ENCODE measurements at regions of chr7 and their contacts with region 1.

Region 1: DNA sequence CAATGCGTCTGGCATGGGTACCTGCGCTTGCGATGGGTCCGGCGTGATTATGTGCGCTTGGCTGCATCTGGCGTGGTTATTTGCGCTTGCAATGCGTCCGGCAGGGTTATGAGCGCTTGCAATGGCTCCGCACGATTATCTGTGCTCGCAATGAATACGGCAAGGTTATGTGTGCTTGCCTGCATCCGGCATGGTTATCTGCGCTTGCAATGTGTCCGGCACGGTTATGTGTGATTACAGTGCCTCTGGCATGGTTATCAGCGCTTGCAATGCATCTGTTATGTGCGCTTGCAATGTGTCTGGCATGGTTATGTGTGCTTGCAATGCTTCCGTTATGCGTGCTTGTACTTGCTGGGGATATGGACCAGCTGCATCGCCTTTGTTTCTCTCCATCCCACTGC is 37.7 kb downstream of the RBAK start:
- DNase-seq: no peak
- ATAC-seq: no peak
- H3K4me3 ChIP-seq: no peak overlapping the region
- H3K27ac ChIP-seq: no peak overlapping the region
- H3K4me1 ChIP-seq: no peaks in the 10 kb centered on the region
- H3K27me3 ChIP-seq: no peaks in the 10 kb centered on the region
- CTCF ChIP-seq: no peak
- EP300 ChIP-seq: no peak
- POLR2A ChIP-seq: no peak
- RAD21 ChIP-seq: no peak

Region 2: GRCh38 chr7:3200504-3200903 is 1882.8 kb before region 1 on chr7:
- CTCF ChIA-PET with region 1: no interaction called
- POLR2A ChIA-PET with region 1: no interaction called
- RAD21 ChIA-PET with region 1: no interaction called
- SMC1A ChIA-PET with region 1: no interaction called
- in situ Hi-C with region 1: no loop called
- intact Hi-C with region 1: loop called (anchors 10 kb)
- DNase-seq: no peak
- ATAC-seq: peak; percentile 67
- H3K4me3 ChIP-seq: no peak overlapping the region
- H3K27ac ChIP-seq: no peak overlapping the region
- H3K4me1 ChIP-seq: no peaks in the 10 kb centered on the region
- H3K27me3 ChIP-seq: no peaks in the 10 kb centered on the region
- CTCF ChIP-seq: peak; percentile 37 to 56 (median 45); a peak in 5 of 6 replicates
- EP300 ChIP-seq: no peak
- POLR2A ChIP-seq: no peak
- RAD21 ChIP-seq: peak; percentile 39

Region 3: GRCh38 chr7:4610768-4611467 is 472.4 kb before region 1 on chr7:
- CTCF ChIA-PET with region 1: no interaction called
- POLR2A ChIA-PET with region 1: no interaction called
- RAD21 ChIA-PET with region 1: no interaction called
- SMC1A ChIA-PET with region 1: no interaction called
- in situ Hi-C with region 1: loop called (anchors 25 kb)
- intact Hi-C with region 1: loop called (anchors 1 kb)
- DNase-seq: peak; percentile 39
- ATAC-seq: peak; percentile 91
- H3K4me3 ChIP-seq: no peak overlapping the region
- H3K27ac ChIP-seq: no peak overlapping the region
- H3K4me1 ChIP-seq: peaks cover 7% of the 10 kb centered on the region
- H3K27me3 ChIP-seq: no peaks in the 10 kb centered on the region; a peak in 1 of 4 replicates
- CTCF ChIP-seq: peak; percentile 77 to 85 (median 78)
- EP300 ChIP-seq: no peak
- POLR2A ChIP-seq: no peak
- RAD21 ChIP-seq: peak; percentile 92

Region 4: GRCh38 chr7:4797858-4798705 is 285.2 kb before region 1 on chr7:
- CTCF ChIA-PET with region 1: interaction called, 30 read pairs
- POLR2A ChIA-PET with region 1: no interaction called
- RAD21 ChIA-PET with region 1: interaction called, 8 read pairs
- SMC1A ChIA-PET with region 1: interaction called, 3 read pairs
- in situ Hi-C with region 1: loop called (anchors 5 kb)
- intact Hi-C with region 1: loop called (anchors 1 kb)
- DNase-seq: no peak
- ATAC-seq: peak; percentile 92
- H3K4me3 ChIP-seq: no peak overlapping the region
- H3K27ac ChIP-seq: no peak overlapping the region
- H3K4me1 ChIP-seq: no peaks in the 10 kb centered on the region
- H3K27me3 ChIP-seq: no peaks in the 10 kb centered on the region
- CTCF ChIP-seq: peak; percentile 65 to 96 (median 85)
- EP300 ChIP-seq: no peak
- POLR2A ChIP-seq: no peak; the same call in 1 of the 2 replicates
- RAD21 ChIP-seq: peak; percentile 51

Region 5: DNA sequence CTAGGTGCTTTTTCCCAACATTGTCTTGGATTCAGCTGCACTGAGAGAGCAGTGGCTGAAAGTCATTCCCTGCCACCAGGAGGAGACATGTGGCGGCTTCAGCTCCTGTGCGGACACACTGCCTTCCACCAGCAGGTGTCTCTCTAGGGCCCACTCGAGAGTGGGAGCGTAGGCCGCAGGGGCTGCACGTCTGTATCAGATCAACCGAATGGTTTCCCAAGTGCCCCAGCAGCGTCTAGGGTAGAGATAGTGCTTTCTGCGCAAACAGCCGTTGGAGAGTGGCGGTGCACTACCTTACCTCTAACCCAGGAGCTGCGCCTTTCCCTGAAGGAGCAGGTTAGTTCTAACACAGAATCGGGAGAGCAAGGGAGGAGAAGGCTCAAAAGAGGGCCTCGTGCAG is 253.1 kb before region 1 on chr7:
- CTCF ChIA-PET with region 1: interaction called, 38 read pairs
- POLR2A ChIA-PET with region 1: no interaction called
- RAD21 ChIA-PET with region 1: interaction called, 13 read pairs
- SMC1A ChIA-PET with region 1: interaction called, 8 read pairs
- in situ Hi-C with region 1: loop called (anchors 5 kb)
- intact Hi-C with region 1: loop called (anchors 1 kb)
- DNase-seq: peak; percentile 11
- ATAC-seq: peak; percentile 99
- H3K4me3 ChIP-seq: no peak overlapping the region
- H3K27ac ChIP-seq: no peak overlapping the region
- H3K4me1 ChIP-seq: no peaks in the 10 kb centered on the region
- H3K27me3 ChIP-seq: no peaks in the 10 kb centered on the region
- CTCF ChIP-seq: peak; percentile 87 to 98 (median 95)
- EP300 ChIP-seq: no peak
- POLR2A ChIP-seq: no peak
- RAD21 ChIP-seq: peak; percentile 58

Region 6: GRCh38 chr7:4895766-4896165 is 187.5 kb before region 1 on chr7:
- CTCF ChIA-PET with region 1: no interaction called
- POLR2A ChIA-PET with region 1: no interaction called
- RAD21 ChIA-PET with region 1: no interaction called
- SMC1A ChIA-PET with region 1: no interaction called
- in situ Hi-C with region 1: no loop called
- intact Hi-C with region 1: no loop called
- DNase-seq: no peak
- ATAC-seq: no peak
- H3K4me3 ChIP-seq: no peak overlapping the region
- H3K27ac ChIP-seq: no peak overlapping the region
- H3K4me1 ChIP-seq: no peaks in the 10 kb centered on the region
- H3K27me3 ChIP-seq: no peaks in the 10 kb centered on the region
- CTCF ChIP-seq: no peak
- EP300 ChIP-seq: no peak
- POLR2A ChIP-seq: no peak
- RAD21 ChIP-seq: no peak

Region 7: GRCh38 chr7:4973728-4974198 is 109.5 kb before region 1 on chr7:
- CTCF ChIA-PET with region 1: interaction called, 15 read pairs
- POLR2A ChIA-PET with region 1: interaction called, 3 read pairs
- RAD21 ChIA-PET with region 1: interaction called, 18 read pairs
- SMC1A ChIA-PET with region 1: interaction called, 7 read pairs
- in situ Hi-C with region 1: loop called (anchors 5 kb)
- intact Hi-C with region 1: loop called (anchors 1 kb)
- DNase-seq: peak; percentile 69
- ATAC-seq: peak; percentile 96
- H3K4me3 ChIP-seq: peak overlapping the region; percentile 76; the same call in 1 of the 2 replicates
- H3K27ac ChIP-seq: peak overlapping the region; percentile 48
- H3K4me1 ChIP-seq: no peaks in the 10 kb centered on the region
- H3K27me3 ChIP-seq: no peaks in the 10 kb centered on the region
- CTCF ChIP-seq: peak; percentile 85 to 89 (median 86)
- EP300 ChIP-seq: no peak
- POLR2A ChIP-seq: peak; percentile 89
- RAD21 ChIP-seq: peak; percentile 76

Region 8: DNA sequence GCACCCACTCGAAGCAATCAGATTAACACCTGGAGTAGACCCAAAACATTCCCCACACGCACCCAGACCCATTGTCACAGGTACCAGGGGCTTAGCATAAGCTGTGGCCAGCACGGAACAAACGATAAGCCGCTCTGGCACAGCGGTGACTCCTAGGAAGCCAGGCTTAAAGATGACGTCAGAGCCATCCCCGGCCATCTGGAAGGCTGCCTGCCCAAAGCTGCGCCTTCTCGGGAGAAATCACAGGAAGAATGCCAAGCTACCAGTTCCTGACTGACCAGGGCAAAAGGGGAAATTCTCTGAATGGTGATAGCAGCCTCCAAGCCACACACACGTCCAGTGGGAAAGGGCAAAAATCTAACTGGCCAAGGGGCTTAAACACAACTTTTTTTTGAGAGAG is 93.7 kb after region 1 on chr7:
- CTCF ChIA-PET with region 1: interaction called, 4 read pairs
- POLR2A ChIA-PET with region 1: interaction called, 3 read pairs
- RAD21 ChIA-PET with region 1: no interaction called
- SMC1A ChIA-PET with region 1: no interaction called
- in situ Hi-C with region 1: no loop called
- intact Hi-C with region 1: loop called (anchors 2 kb)
- DNase-seq: no peak
- ATAC-seq: no peak
- H3K4me3 ChIP-seq: no peak overlapping the region
- H3K27ac ChIP-seq: no peak overlapping the region
- H3K4me1 ChIP-seq: no peaks in the 10 kb centered on the region
- H3K27me3 ChIP-seq: no peaks in the 10 kb centered on the region
- CTCF ChIP-seq: no peak
- EP300 ChIP-seq: no peak
- POLR2A ChIP-seq: no peak
- RAD21 ChIP-seq: no peak

Measured in GM12878 (cell line).